ENCODE measurements at regions of chr1 and their contacts with region 1.

Region 1: DNA sequence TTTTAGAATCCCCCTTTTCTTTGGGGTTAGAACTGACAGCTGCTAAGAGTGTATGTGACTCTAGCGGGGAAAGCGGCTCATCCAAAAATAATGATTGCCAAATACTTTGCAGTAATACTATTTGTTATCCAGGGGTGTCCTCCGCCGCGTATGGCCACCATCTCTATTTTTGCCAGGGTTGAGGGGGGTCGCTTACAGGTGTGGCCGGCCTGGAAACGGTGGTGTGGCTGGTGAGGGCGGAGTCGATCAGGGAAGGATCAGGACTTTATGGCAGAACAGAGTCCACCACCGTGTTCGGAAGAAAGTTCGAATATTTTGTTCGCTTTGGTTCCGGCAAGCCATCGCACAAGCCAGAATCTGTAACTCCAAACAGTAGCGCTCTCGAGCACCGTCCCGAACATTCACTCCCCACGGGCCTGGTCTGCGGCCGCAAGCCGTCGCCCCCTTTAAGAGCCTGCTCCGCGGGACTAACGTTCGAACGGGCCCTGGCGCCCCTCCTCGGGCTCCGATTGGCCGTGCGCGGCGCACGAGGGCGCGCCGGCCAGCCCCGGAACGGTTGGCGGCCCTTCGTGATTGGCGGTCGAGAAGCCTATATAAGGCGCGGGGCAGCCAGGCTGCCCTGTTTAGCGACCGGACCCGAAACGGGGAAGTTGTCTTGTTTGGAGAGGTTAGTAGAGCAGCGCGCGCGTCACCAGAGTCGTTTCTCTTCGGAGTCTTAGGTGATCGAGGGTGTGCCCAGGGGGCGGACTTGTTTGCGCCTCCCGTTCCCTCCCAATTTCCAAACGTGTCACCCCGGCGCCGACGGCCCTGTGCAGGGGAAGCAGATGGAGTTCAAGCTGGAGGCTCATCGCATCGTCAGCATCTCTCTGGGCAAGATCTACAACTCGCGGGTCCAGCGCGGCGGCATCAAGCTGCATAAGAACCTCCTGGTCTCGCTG is at the start of gene IER5:
- DNase-seq: peak; percentile 97
- ATAC-seq: peak; percentile 80
- H3K4me3 Mint-ChIP-seq: peak within 1 kb of the TSS; percentile 100
- H3K27ac Mint-ChIP-seq: peak within 1 kb of the TSS; percentile 100
- H3K4me1 Mint-ChIP-seq: peaks cover 53% of the 10 kb centered on the region
- H3K27me3 Mint-ChIP-seq: no peaks in the 10 kb centered on the region
- total RNA-seq, gene IER5: 16.3 to 24.3 TPM

Region 2: GRCh38 chr1:180502360-180503273 is 585.7 kb before region 1 on chr1 and contains the start of gene ACBD6:
- CTCF ChIA-PET with region 1: interaction called, 5 read pairs
- POLR2A ChIA-PET with region 1: interaction called, 3 read pairs
- intact Hi-C with region 1: loop called (anchors 5 to 10 kb)
- DNase-seq: peak; percentile 94
- ATAC-seq: peak; percentile 95
- H3K4me3 Mint-ChIP-seq: peak within 1 kb of the TSS; percentile 96
- H3K27ac Mint-ChIP-seq: peak within 1 kb of the TSS; percentile 97
- H3K4me1 Mint-ChIP-seq: peaks cover 33% of the 10 kb centered on the region
- H3K27me3 Mint-ChIP-seq: no peaks in the 10 kb centered on the region
- total RNA-seq, gene ACBD6: 45.6 to 46.8 TPM

Region 3: DNA sequence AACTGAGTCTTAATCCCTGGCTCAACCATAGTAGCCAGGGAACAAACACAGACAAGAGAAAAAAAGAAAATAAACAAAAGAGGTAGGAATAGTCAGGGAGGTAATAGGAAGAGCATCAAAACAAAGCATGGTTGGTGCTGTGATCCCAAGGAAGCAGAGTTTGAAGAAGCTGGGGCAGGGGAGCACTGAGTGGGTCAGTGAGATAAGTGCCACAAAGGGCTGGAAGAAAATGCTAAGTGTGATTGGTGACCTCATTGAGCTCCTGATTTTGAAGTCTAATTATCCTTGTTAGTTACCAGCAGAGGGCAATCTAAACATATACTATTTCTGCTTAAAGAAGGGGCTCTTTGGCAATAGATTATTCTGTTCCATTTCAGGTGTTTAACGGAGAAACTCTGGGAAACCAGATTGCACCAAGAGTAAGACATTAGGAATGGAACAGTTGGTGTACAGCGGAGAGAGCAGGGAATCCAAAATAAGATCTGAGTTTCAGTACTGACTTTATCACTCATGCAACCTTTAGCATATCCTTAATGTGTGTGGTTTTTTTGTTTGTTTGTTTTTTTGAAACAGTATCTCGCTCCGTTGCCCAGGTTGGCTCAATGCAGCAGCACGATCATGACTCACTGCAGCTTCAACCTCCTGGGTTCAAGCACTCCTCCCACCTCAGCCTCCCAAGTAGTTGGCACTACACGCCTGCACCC is 206.4 kb before region 1 on chr1:
- CTCF ChIA-PET with region 1: interaction called, 3 read pairs
- POLR2A ChIA-PET with region 1: no interaction called
- intact Hi-C with region 1: loop called in 1 of 2 experiments (anchors 5 kb)
- DNase-seq: no peak
- ATAC-seq: peak; percentile 66
- H3K4me3 Mint-ChIP-seq: no peak overlapping the region
- H3K27ac Mint-ChIP-seq: no peak overlapping the region
- H3K4me1 Mint-ChIP-seq: no peaks in the 10 kb centered on the region
- H3K27me3 Mint-ChIP-seq: no peaks in the 10 kb centered on the region

Region 4: GRCh38 chr1:181021811-181022434 is 66.4 kb before region 1 on chr1:
- CTCF ChIA-PET with region 1: interaction called, 6 read pairs
- POLR2A ChIA-PET with region 1: interaction called, 9 read pairs
- intact Hi-C with region 1: loop called in 1 of 2 experiments (anchors 1 kb)
- DNase-seq: peak; percentile 85
- ATAC-seq: peak; percentile 66
- H3K4me3 Mint-ChIP-seq: peak overlapping the region; percentile 89
- H3K27ac Mint-ChIP-seq: peak overlapping the region; percentile 97
- H3K4me1 Mint-ChIP-seq: peaks cover 42% of the 10 kb centered on the region
- H3K27me3 Mint-ChIP-seq: peaks cover 5% of the 10 kb centered on the region

Region 5: DNA sequence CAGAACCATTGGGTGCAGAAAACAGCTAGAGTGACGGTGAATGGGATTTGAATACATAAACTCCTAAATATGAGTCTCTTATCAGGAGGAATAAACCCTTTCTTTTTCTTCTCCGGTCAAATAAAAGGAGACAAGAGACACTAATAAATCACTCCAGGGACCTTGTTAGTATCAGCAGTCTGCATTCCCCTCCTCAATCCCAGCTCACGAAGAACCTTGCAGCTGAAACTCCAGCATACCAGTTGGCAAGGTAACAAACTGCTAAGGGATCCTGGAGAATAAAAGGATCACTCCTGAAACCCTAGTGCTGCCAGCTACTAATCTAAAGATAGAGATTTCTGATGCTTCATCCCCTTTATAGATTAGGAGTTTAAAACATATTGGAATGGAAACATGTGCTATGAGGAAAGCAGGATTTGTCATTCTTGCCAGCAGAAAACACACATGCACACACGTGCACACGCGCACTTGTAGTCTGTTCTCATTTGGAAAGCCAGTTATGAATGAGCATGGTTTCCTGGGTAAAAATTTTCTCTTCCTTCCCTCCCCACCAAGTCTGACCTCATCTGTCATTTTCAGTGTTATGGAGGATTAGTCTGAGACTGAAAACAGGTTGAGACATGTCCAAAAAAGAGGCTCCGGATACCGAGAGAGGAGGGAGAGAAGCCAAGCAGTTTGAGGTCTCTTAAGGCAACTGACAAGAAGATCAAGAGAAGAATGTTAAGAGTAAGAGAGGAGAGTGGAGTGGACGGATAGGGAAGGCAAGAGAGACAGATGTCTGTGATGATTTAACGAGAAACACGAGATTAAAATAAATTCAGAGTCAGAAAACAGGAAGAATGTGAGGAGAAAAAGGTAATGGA is 11.0 kb after region 1 on chr1:
- CTCF ChIA-PET with region 1: interaction called, 24 read pairs
- POLR2A ChIA-PET with region 1: interaction called, 33 read pairs
- intact Hi-C with region 1: loop called (anchors 1 kb)
- DNase-seq: peak; percentile 73
- ATAC-seq: peak; percentile 87
- H3K4me3 Mint-ChIP-seq: peak overlapping the region; percentile 56
- H3K27ac Mint-ChIP-seq: peak overlapping the region; percentile 94
- H3K4me1 Mint-ChIP-seq: peaks cover 77% of the 10 kb centered on the region
- H3K27me3 Mint-ChIP-seq: no peaks in the 10 kb centered on the region

Region 6: GRCh38 chr1:181166377-181167196 is 78.2 kb after region 1 on chr1:
- CTCF ChIA-PET with region 1: interaction called, 7 read pairs
- POLR2A ChIA-PET with region 1: interaction called, 11 read pairs
- intact Hi-C with region 1: loop called (anchors 1 kb)
- DNase-seq: peak; percentile 84
- ATAC-seq: peak; percentile 100
- H3K4me3 Mint-ChIP-seq: no peak overlapping the region
- H3K27ac Mint-ChIP-seq: peak overlapping the region; percentile 68
- H3K4me1 Mint-ChIP-seq: peaks cover 4% of the 10 kb centered on the region
- H3K27me3 Mint-ChIP-seq: no peaks in the 10 kb centered on the region

Region 7: GRCh38 chr1:181259026-181259745 is 170.8 kb after region 1 on chr1:
- CTCF ChIA-PET with region 1: no interaction called
- POLR2A ChIA-PET with region 1: no interaction called
- intact Hi-C with region 1: no loop called
- DNase-seq: no peak
- ATAC-seq: no peak
- H3K4me3 Mint-ChIP-seq: no peak overlapping the region
- H3K27ac Mint-ChIP-seq: no peak overlapping the region
- H3K4me1 Mint-ChIP-seq: no peaks in the 10 kb centered on the region
- H3K27me3 Mint-ChIP-seq: no peaks in the 10 kb centered on the region

Region 8: DNA sequence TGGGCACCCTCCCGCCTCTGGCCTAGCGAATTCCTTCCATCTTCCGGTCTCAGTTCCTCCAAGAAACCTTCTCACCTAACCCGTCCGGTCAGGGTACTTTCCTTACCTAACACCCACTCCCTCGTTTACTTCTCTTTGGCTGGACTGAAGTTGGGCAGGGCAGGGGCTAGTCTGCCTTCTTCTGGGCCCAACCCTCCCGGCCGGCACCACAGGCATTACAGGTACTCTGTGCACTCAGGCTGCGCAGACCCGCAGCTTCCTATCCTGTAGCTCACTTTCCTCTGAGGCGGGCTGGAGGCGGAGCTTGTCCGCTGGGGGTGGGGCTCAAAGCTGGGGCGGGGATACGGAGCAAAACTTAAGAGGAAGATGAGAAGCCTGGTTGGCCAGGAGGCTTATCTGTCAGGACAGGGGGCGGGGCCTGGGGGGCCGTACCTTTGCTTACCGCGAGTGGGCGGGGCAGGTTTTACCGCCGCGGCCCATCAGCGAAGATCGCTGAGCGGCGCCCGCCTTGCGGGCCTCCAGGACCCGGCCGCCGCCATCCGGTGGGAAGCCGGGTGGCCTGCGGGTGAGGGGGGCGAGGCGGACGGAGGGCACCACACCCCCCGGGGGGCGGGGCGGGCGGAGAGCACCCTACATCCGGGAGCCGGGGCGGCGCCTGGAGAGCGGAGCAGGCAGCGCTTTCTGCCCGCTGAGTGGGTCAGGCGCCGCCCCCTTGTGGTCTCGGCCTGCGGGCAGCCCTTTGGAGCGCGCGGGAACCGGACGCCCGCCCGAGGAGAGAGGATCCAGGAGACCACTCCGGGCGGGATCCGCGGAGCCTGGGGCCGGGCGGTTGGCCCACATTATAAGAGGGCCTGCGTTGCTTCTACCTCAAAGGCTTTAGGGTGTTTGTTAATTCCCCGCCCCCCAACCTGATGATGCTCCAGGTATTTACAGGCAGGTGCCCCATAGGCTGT is 941.3 kb after region 1 on chr1:
- CTCF ChIA-PET with region 1: no interaction called
- POLR2A ChIA-PET with region 1: no interaction called
- intact Hi-C with region 1: loop called in 1 of 2 experiments (anchors 5 kb)
- DNase-seq: peak; percentile 99
- ATAC-seq: peak; percentile 96
- H3K4me3 Mint-ChIP-seq: peak overlapping the region; percentile 86
- H3K27ac Mint-ChIP-seq: peak overlapping the region; percentile 97
- H3K4me1 Mint-ChIP-seq: peaks cover 11% of the 10 kb centered on the region
- H3K27me3 Mint-ChIP-seq: no peaks in the 10 kb centered on the region

Measured in activated CD4-positive, alpha-beta T cell treated with anti-CD3 and anti-CD28 coated beads for 36 hours (primary cell).